Activated CD4-positive, alpha-beta memory T cell treated with anti-CD3 and anti-CD28 coated beads for 36 hours (primary cell): ENCODE measurements at regions of chr1 and their contacts with region 1.

Region 1: DNA sequence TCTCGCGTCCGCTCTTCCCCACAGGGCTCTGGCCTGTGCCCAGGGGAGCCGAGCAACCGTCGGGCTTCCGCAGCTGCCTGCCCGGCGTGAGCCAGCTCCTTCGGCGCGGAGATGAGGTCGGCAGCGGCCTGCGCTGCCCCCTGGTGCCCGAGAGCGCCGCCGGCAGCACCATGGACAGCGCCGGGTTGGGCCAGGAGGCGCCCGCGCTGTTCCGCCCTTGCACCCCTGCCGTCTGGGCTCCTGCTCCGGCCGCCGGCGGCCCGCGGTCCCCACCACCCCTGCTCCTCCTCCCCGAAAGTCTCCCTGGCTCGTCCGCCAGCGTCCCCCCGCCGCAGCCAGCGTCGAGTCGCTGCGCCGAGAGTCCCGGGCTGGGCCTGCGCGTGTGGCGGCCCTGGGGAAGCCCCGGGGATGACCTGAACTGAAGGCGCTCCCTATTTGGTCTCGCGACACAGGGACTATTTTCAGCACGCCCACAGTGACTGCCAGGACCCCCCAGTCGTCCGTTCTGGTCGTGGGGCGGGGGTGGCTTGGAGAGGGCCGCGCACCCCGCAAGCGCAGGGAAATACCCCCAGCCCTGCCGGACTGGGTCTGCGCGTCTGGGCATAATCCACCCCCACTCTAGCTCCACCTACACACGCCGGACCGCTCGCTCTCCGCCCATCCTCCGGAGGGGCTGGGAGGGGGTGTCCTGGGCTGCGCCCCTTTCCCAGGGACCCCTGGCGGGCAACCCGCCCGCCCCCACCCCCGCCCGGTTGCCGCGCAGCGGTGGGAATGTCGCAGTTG is 1.3 kb downstream of the HES3 start:
- DNase-seq: peak; percentile 84
- H3K4me3 Mint-ChIP-seq: no peak overlapping the region
- H3K27ac Mint-ChIP-seq: no peak overlapping the region
- H3K4me1 Mint-ChIP-seq: peaks cover 8% of the 10 kb centered on the region
- H3K27me3 Mint-ChIP-seq: peaks cover 56% of the 10 kb centered on the region

Region 2: GRCh38 chr1:5690898-5691297 is 554.4 kb before region 1 on chr1:
- CTCF ChIA-PET with region 1: no interaction called
- POLR2A ChIA-PET with region 1: no interaction called
- intact Hi-C with region 1: no loop called
- DNase-seq: no peak
- H3K4me3 Mint-ChIP-seq: no peak overlapping the region
- H3K27ac Mint-ChIP-seq: no peak overlapping the region
- H3K4me1 Mint-ChIP-seq: no peaks in the 10 kb centered on the region
- H3K27me3 Mint-ChIP-seq: peaks cover 9% of the 10 kb centered on the region

Region 3: DNA sequence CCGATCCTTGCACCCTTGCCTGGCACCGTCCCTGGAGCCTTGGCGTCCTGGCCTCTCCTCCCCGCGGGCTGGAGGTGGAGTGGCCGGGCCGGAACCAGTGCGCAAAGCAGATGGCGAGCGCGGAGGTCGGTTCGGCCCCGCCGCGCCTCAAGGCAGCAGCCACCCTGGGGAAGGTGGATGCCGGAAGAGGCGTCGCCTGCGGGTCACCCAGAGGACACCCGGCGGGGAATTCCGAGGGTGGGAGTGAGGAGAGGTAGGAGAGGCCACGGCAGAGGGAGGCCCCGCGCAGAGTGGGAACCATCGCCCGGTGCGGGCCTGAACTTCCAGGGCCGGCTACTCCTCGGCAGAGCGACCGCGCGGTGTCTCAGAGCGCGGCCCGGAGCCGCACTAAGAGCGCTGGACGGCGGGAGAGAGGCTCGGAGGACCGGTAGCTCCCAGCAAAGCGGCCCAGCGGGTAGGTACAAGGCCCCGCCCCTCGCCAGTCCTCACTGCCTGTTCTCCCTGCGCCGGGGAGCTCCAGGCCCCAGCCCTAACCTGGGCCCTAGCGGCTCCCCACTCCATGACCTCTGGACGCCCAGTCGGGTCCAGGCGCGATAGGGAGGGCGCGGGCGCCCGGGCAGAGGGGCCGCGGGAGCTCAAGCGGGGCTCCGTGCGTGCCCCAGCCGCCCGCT is 39.3 kb before region 1 on chr1 and contains the start of gene RNF207:
- CTCF ChIA-PET with region 1: interaction called, 12 read pairs
- POLR2A ChIA-PET with region 1: interaction called, 3 read pairs
- intact Hi-C with region 1: loop called (anchors 2 kb)
- DNase-seq: peak; percentile 80
- H3K4me3 Mint-ChIP-seq: peak within 1 kb of the TSS; percentile 75
- H3K27ac Mint-ChIP-seq: peak within 1 kb of the TSS; percentile 64
- H3K4me1 Mint-ChIP-seq: peaks cover 14% of the 10 kb centered on the region
- H3K27me3 Mint-ChIP-seq: peaks cover 13% of the 10 kb centered on the region
- total RNA-seq, gene RNF207: 14.7 to 18.4 TPM

Region 4: DNA sequence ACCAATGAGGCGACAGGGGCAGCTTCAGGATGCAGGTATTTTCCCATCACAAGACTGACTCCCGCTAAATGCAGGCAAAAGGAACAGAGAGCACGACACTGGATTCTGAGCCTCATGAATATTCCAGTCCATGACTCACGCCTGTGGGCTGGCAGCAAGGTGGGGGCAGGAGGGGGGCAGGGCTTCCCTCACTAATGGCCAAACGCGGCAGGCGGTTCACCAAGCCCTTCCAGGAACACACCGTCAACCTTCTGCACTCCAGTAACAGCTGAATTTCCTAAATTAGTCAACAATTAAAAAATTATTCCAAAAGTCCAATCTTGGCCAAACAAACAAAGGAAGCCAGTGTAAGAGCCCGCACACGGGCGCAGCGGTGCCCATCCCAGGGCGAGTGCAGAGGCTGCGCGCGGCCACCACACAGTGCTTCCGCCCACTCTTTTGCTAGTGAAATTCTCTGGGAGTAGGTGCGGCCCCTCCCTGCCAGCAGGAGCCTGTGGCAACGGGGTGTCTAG is 28.2 kb after region 1 on chr1:
- CTCF ChIA-PET with region 1: no interaction called
- POLR2A ChIA-PET with region 1: no interaction called
- intact Hi-C with region 1: no loop called
- DNase-seq: no peak
- H3K4me3 Mint-ChIP-seq: no peak overlapping the region
- H3K27ac Mint-ChIP-seq: no peak overlapping the region
- H3K4me1 Mint-ChIP-seq: no peaks in the 10 kb centered on the region
- H3K27me3 Mint-ChIP-seq: no peaks in the 10 kb centered on the region

Region 5: DNA sequence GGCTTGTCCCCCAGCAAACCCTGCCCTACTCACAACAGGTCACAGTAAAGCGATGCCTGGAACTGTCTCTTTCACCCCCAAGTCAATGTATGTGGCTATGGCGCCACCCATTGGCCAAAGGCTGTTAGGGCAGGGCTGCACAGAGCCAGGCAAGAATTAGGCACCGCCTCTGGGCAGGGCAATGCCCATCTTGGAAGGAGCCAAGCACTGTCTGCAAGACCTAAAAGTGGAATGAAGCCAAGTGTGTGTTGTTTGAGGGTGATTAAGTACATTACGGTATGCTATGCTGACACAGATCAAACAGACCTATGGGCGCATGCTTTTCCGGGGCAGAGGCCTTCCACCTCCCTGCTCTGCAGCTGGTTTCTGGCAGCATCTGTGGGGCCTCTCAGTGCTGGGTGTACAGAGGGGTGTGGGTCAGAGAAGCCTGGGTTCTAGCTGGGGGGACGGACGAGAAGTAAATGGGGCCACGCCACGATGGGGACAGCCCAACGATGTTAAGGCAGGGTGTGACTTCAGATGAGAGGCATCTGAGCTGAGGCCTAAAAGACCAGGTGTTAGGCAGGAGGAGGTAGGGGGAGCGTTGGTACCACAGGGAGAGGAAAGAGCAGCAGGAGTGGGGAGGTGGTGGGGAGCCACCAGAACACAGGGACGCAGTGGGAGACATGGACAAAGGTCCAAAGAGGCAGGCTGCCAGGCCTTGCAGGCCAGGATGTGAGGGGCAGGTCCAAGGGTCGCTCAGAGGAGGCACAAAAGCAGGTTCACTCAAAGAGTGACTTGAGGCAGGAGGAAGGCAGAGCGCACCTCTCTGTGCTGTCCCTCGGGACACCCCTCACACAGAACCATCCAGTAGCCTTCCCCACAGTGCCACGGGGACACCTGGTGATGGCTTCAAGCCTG is 98.5 kb after region 1 on chr1:
- CTCF ChIA-PET with region 1: interaction called, 23 read pairs
- POLR2A ChIA-PET with region 1: no interaction called
- intact Hi-C with region 1: loop called (anchors 1 kb)
- DNase-seq: peak; percentile 76
- H3K4me3 Mint-ChIP-seq: no peak overlapping the region
- H3K27ac Mint-ChIP-seq: no peak overlapping the region
- H3K4me1 Mint-ChIP-seq: peaks cover 10% of the 10 kb centered on the region
- H3K27me3 Mint-ChIP-seq: no peaks in the 10 kb centered on the region

Region 6: DNA sequence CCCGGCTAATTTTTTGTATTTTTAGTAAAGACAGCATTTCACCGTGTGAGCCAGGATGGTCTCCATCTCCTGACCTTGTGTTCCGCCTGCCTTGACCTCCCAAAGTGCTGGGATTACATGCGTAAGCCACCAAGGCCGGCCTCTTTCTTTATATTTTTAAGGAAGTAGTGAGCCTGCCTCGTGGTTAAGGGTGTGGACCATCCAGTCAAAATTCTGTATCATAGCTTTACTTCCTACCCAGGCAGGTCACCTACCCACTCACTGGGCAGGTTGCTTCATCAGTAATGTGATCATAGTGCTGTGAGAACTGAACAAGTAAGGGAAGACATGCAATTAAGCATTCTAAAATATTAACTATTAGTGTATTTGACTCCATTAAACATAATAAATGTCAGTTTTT is 156.4 kb after region 1 on chr1:
- CTCF ChIA-PET with region 1: interaction called, 56 read pairs
- POLR2A ChIA-PET with region 1: no interaction called
- intact Hi-C with region 1: loop called (anchors 1 kb)
- DNase-seq: no peak
- H3K4me3 Mint-ChIP-seq: no peak overlapping the region
- H3K27ac Mint-ChIP-seq: no peak overlapping the region
- H3K4me1 Mint-ChIP-seq: peaks cover 3% of the 10 kb centered on the region
- H3K27me3 Mint-ChIP-seq: no peaks in the 10 kb centered on the region

Region 7: DNA sequence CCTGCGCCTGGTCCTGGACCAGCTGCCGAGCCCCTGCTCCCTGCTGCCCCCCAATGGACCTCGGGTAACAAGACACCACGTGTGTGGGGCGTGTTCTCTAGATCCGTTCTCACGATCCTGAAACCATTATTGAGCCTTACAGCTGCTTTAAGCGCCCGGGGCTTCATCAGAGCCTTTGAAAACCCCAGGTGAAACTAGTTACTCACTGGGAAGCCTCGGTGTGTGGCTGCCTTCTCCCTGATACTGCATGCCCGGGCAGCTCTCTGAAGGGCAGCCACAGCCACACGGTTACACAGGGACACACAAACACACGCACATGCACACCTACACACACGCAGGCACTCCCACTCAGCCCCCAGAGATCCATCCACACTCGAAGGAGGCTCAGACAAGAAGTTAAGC is 169.2 kb after region 1 on chr1:
- CTCF ChIA-PET with region 1: interaction called, 60 read pairs
- POLR2A ChIA-PET with region 1: no interaction called
- intact Hi-C with region 1: no loop called
- DNase-seq: peak; percentile 66
- H3K4me3 Mint-ChIP-seq: no peak overlapping the region
- H3K27ac Mint-ChIP-seq: no peak overlapping the region
- H3K4me1 Mint-ChIP-seq: peaks cover 8% of the 10 kb centered on the region
- H3K27me3 Mint-ChIP-seq: peaks cover 50% of the 10 kb centered on the region

Region 8: DNA sequence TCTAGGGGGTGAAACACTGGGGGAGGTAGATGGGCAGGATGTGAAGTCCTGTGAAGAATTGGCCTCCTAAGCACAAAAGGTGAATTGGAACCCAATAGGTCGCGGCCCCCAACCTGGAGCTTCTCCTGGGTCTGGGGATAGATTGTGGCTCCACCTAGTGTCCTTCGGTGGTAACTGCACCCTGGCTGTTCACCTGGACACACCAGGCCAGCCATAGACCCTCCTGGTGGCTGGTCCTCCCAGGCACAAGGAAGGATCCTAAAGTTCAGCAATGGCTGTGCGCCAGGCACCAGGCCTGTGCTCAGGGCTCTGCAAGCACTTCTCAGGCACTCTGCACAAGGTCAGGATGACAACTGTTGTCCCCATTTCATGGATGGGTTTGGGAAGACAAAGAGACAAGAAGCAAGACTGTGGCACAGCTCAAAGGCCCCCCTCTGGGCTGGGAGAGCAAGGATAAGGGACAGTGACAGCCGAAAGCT is 192.8 kb after region 1 on chr1:
- CTCF ChIA-PET with region 1: interaction called, 36 read pairs
- POLR2A ChIA-PET with region 1: no interaction called
- intact Hi-C with region 1: no loop called
- DNase-seq: peak; percentile 82
- H3K4me3 Mint-ChIP-seq: no peak overlapping the region
- H3K27ac Mint-ChIP-seq: no peak overlapping the region
- H3K4me1 Mint-ChIP-seq: peaks cover 6% of the 10 kb centered on the region
- H3K27me3 Mint-ChIP-seq: peaks cover 19% of the 10 kb centered on the region

Region 9: DNA sequence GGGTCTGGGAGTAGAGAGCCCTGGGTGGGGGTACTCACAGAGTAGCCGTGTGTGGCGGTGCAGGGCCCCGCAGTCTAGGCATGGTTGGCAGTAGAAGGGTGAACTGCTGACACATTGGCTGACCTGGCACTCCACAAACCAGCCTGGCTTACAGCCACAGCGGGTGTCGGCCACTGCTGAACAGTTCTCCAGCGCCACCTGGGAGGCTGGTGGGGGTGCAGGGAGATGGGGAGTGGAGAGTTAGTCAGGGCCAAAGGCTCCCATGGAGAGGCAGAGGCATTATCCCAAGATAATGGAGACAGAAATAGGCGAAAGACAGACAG is 219.2 kb after region 1 on chr1:
- CTCF ChIA-PET with region 1: interaction called, 14 read pairs
- POLR2A ChIA-PET with region 1: no interaction called
- intact Hi-C with region 1: no loop called
- DNase-seq: peak; percentile 83
- H3K4me3 Mint-ChIP-seq: peak overlapping the region; percentile 82
- H3K27ac Mint-ChIP-seq: peak overlapping the region; percentile 83
- H3K4me1 Mint-ChIP-seq: peaks cover 54% of the 10 kb centered on the region
- H3K27me3 Mint-ChIP-seq: no peaks in the 10 kb centered on the region